Activated naive CD4-positive, alpha-beta T cell treated with anti-CD3 and anti-CD28 coated beads, Interleukin-2, amount 10 ng/mL, durations not matched to agents 7 days and 5 days (primary cell): ENCODE measurements at regions of chr1 and their contacts with region 1.

Region 1: DNA sequence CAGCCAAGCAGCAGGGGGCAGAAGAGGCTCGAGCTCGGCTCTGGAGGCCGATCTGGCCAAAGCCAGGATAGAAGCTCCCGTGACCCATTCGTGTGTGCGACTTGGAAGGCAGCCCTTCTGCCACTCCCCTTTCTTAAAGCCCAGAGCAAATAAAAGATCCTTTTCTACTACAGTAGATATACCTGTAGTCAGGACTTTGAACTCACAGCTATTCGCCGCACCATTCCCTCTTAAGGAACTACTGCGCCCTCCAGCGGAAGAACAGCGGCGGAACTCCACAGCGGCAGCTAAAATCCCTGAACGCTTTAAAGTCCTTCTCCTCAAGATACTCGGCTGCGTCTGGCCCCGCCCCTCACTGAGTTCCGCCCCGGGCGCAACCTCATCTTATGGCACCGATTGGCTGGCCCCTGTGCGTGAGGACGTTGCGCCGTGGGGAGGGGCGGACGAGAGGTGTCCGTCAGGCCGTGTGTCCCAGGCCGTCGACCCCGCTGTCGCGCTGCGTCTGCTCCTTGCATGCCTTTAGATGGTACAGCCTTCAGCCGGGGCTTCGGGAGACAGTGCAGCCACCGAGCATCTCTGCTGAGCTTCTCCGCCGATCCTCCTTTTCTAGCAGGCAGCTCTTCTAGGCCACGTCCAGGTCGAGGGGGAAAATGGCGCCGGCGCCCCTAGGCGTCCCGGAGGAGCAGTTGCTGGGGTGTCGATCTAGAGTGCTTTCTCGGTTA is at the start of gene LRIG2:
- DNase-seq: peak; percentile 100
- H3K4me3 Mint-ChIP-seq: peak within 1 kb of the TSS; percentile 85
- H3K27ac Mint-ChIP-seq: peak within 1 kb of the TSS; percentile 85
- H3K4me1 Mint-ChIP-seq: peaks cover 32% of the 10 kb centered on the region
- H3K27me3 Mint-ChIP-seq: no peaks in the 10 kb centered on the region

Region 2: GRCh38 chr1:112715264-112716053 is 357.5 kb before region 1 on chr1 and contains the start of gene PPM1J:
- CTCF ChIA-PET with region 1: interaction called, 28 read pairs
- DNase-seq: peak; percentile 99
- H3K4me3 Mint-ChIP-seq: peak within 1 kb of the TSS; percentile 79
- H3K27ac Mint-ChIP-seq: no peak within 1 kb of the TSS
- H3K4me1 Mint-ChIP-seq: peaks cover 23% of the 10 kb centered on the region
- H3K27me3 Mint-ChIP-seq: peaks cover 86% of the 10 kb centered on the region

Region 3: GRCh38 chr1:112803906-112804762 is 268.8 kb before region 1 on chr1:
- CTCF ChIA-PET with region 1: interaction called, 13 read pairs
- DNase-seq: peak; percentile 73
- H3K4me3 Mint-ChIP-seq: no peak overlapping the region
- H3K27ac Mint-ChIP-seq: no peak overlapping the region
- H3K4me1 Mint-ChIP-seq: no peaks in the 10 kb centered on the region
- H3K27me3 Mint-ChIP-seq: peaks cover 31% of the 10 kb centered on the region

Region 4: GRCh38 chr1:112809253-112809684 is 263.6 kb before region 1 on chr1:
- CTCF ChIA-PET with region 1: interaction called, 13 read pairs
- DNase-seq: peak; percentile 82
- H3K4me3 Mint-ChIP-seq: no peak overlapping the region
- H3K27ac Mint-ChIP-seq: no peak overlapping the region
- H3K4me1 Mint-ChIP-seq: no peaks in the 10 kb centered on the region
- H3K27me3 Mint-ChIP-seq: peaks cover 42% of the 10 kb centered on the region

Region 5: DNA sequence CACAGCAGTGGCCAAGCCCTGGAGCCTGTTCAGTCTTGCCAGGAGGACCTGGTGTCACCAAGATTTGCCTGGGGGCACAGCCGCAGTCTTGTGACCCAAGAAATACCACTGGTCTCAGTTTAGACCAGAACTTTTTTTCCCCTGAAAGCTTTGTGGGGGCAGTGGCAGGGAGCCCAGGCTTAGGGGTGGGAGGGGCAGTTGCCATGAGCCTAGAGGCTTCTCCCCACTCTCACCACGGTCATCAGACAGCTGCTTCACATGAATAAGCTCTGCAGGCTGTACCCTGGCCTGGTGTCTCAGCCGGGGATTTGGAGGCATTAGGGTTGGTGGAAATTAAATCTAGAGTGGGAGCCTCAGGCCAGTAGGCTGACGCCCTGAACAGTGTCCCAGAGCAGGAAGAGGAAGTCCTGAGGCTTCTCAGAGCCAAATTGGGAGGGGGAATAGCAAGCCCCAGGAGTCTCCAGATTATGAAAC is 190.6 kb before region 1 on chr1:
- CTCF ChIA-PET with region 1: interaction called, 52 read pairs
- DNase-seq: no peak
- H3K4me3 Mint-ChIP-seq: no peak overlapping the region
- H3K27ac Mint-ChIP-seq: no peak overlapping the region
- H3K4me1 Mint-ChIP-seq: no peaks in the 10 kb centered on the region
- H3K27me3 Mint-ChIP-seq: peaks cover 31% of the 10 kb centered on the region

Region 6: GRCh38 chr1:113042285-113043143 is 30.4 kb before region 1 on chr1:
- CTCF ChIA-PET with region 1: interaction called, 17 read pairs
- DNase-seq: peak; percentile 41
- H3K4me3 Mint-ChIP-seq: no peak overlapping the region
- H3K27ac Mint-ChIP-seq: no peak overlapping the region
- H3K4me1 Mint-ChIP-seq: peaks cover 50% of the 10 kb centered on the region
- H3K27me3 Mint-ChIP-seq: peaks cover 10% of the 10 kb centered on the region

Region 7: GRCh38 chr1:113057006-113057405 is 15.9 kb before region 1 on chr1:
- CTCF ChIA-PET with region 1: interaction called, 54 read pairs
- DNase-seq: no peak
- H3K4me3 Mint-ChIP-seq: no peak overlapping the region
- H3K27ac Mint-ChIP-seq: no peak overlapping the region
- H3K4me1 Mint-ChIP-seq: peaks cover 26% of the 10 kb centered on the region
- H3K27me3 Mint-ChIP-seq: no peaks in the 10 kb centered on the region

Region 8: GRCh38 chr1:113219377-113219776 is 146.5 kb after region 1 on chr1:
- CTCF ChIA-PET with region 1: no interaction called
- DNase-seq: no peak
- H3K4me3 Mint-ChIP-seq: no peak overlapping the region
- H3K27ac Mint-ChIP-seq: no peak overlapping the region
- H3K4me1 Mint-ChIP-seq: no peaks in the 10 kb centered on the region
- H3K27me3 Mint-ChIP-seq: peaks cover 9% of the 10 kb centered on the region

Region 9: DNA sequence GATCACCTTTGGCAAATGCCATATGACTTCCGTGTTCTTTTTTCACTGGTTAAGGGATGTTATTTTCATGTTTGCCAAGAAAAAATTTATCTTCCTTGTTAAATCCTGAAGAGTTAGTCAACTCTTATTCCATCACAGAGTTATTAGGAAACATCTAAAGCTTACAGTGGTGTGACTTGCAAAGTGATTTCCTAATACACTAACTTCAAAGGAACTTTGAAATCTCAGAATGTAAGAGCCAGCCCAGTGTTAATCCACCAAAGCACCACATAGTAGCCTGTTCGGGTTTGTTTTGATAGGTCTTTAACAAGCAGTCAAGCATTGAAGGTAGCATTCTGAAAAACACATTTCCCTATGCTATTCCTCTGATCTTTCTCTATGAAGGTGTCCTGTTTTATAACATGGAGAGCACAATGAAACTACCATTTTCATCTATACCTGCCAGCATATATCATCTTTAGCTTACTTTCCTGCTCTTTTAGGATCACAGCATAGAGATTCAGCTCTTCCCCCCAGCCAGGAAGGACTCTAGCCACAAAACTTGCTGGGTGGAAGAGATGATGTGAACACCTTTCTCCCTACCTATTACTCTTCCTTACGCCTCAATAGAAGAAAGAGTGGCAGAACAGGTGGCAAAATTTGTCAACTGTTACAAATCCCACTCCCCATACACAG is 235.0 kb after region 1 on chr1:
- CTCF ChIA-PET with region 1: no interaction called
- DNase-seq: no peak
- H3K4me3 Mint-ChIP-seq: no peak overlapping the region
- H3K27ac Mint-ChIP-seq: no peak overlapping the region
- H3K4me1 Mint-ChIP-seq: peaks cover 7% of the 10 kb centered on the region
- H3K27me3 Mint-ChIP-seq: peaks cover 4% of the 10 kb centered on the region

Region 10: GRCh38 chr1:113542221-113542701 is 469.3 kb after region 1 on chr1:
- CTCF ChIA-PET with region 1: no interaction called
- DNase-seq: no peak
- H3K4me3 Mint-ChIP-seq: no peak overlapping the region
- H3K27ac Mint-ChIP-seq: no peak overlapping the region
- H3K4me1 Mint-ChIP-seq: peaks cover 5% of the 10 kb centered on the region
- H3K27me3 Mint-ChIP-seq: no peaks in the 10 kb centered on the region